Activated CD4-positive, alpha-beta T cell treated with anti-CD3 and anti-CD28 coated beads, Interleukin-2, amount 10 ng/mL, durations not matched to agents 24 days and 14 days (primary cell): ENCODE measurements at regions of chr1 and their contacts with region 1.

Region 1: GRCh38 chr1:228165372-228166169 is at the start of gene IBA57:
- DNase-seq: peak; percentile 100
- H3K4me3 Mint-ChIP-seq: peak within 1 kb of the TSS; percentile 91
- H3K27ac Mint-ChIP-seq: peak within 1 kb of the TSS; percentile 96
- H3K4me1 Mint-ChIP-seq: peaks cover 25% of the 10 kb centered on the region
- H3K27me3 Mint-ChIP-seq: no peaks in the 10 kb centered on the region
- total RNA-seq, gene IBA57: 10.8 and 11.4 TPM in 2 replicates

Region 2: DNA sequence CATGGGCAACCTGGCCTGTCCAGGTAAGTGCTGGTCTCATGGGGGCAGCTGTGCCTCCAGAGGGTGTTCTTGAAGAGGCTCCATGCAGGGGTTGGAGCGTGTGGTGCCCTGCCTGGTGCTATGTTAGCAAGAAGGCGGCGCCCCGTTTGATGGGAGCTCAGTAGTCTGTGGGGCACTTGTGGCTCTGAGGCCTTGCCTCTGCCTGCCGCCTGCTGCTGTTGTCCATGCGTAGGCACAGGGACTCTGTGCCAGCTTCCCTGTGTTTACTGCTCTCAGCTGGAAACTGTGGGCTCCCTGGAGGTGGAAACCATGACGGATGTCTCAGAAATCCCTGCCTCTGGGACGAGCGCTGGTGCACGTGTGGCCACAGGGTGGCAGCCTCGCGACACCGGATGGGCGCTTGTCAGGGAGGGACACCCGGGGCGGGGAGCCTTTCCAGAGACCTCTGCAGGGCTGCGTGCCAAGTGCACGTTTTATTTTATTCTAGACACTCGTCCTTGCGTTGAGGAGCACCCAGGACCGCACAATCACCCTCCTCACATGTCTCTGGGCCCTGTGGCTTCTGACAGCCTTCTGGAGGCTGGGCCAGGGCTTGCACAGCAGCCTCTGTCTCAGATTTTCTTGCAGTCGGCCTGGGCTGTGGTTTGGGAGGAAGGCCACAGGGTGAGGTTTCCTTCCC is 403.2 kb before region 1 on chr1:
- intact Hi-C with region 1: loop called (anchors 10 kb)
- DNase-seq: peak; percentile 96
- H3K4me3 Mint-ChIP-seq: peak overlapping the region; percentile 62
- H3K27ac Mint-ChIP-seq: peak overlapping the region; percentile 71
- H3K4me1 Mint-ChIP-seq: peaks cover 81% of the 10 kb centered on the region
- H3K27me3 Mint-ChIP-seq: no peaks in the 10 kb centered on the region

Region 3: DNA sequence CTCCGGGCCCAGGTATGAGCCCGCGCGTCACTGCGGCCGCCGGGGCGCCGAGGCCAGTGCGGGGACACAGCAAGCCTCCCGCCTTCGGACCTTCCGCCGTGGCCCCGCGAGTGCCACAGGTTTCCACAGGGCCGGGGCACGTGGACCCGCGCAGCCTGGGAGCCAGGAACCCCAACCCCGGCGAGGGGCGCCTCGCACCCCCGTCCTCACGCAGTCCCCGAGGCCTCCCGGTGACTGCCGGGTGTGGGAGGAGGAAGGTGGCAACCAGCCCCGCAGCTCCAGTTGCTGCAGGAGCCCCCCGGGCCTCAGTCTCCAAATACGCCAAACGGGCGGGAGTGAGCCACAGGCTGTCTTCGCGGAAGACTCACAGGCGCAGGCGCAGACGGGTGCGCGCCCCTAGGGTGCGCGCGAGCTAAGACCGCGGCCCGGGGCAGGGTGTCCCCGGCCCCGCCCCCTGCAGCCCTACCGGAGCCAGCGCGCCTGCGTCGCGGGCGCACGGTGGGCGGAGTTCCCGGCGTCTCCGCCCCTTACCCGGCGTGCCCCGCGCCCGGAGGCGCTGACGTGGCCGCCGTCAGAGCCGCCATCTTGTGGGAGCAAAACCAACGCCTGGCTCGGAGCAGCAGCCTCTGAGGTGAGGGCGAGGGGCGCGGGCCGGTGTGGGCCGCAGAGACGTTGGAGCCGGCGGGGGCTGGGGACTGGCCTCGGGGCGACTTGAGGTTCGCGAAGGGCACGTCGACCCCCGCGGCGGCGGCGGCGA is 83.3 kb before region 1 on chr1 and contains the start of gene ARF1:
- intact Hi-C with region 1: loop called (anchors 1 kb)
- DNase-seq: peak; percentile 98
- H3K4me3 Mint-ChIP-seq: peak within 1 kb of the TSS; percentile 97
- H3K27ac Mint-ChIP-seq: peak within 1 kb of the TSS; percentile 93
- H3K4me1 Mint-ChIP-seq: peaks cover 39% of the 10 kb centered on the region
- H3K27me3 Mint-ChIP-seq: no peaks in the 10 kb centered on the region
- total RNA-seq, gene ARF1: 388 and 395 TPM in 2 replicates

Region 4: GRCh38 chr1:228131766-228132165 is 33.8 kb before region 1 on chr1:
- intact Hi-C with region 1: loop called (anchors 2 kb)
- DNase-seq: no peak
- H3K4me3 Mint-ChIP-seq: no peak overlapping the region
- H3K27ac Mint-ChIP-seq: no peak overlapping the region
- H3K4me1 Mint-ChIP-seq: peaks cover 8% of the 10 kb centered on the region
- H3K27me3 Mint-ChIP-seq: peaks cover 40% of the 10 kb centered on the region

Region 5: GRCh38 chr1:228212966-228213844 is 47.6 kb after region 1 on chr1:
- intact Hi-C with region 1: loop called (anchors 1 kb)
- DNase-seq: peak; percentile 95
- H3K4me3 Mint-ChIP-seq: peak overlapping the region; percentile 95
- H3K27ac Mint-ChIP-seq: peak overlapping the region; percentile 91
- H3K4me1 Mint-ChIP-seq: peaks cover 7% of the 10 kb centered on the region
- H3K27me3 Mint-ChIP-seq: no peaks in the 10 kb centered on the region

Region 6: DNA sequence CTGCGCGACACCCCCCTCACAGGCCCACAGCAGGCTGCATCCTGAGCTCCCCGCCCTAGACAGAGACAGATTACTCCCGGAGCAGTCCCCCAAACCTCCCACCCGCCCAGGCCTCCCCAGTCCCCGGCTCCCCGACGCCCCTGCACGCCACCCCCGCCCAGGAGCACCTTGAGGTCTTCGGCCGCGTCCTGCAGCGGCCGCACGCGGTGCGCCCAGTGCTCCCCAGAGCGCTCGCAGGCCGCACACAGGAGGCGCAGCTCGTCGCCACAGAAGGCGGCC is 240.4 kb after region 1 on chr1:
- intact Hi-C with region 1: loop called (anchors 1 kb)
- DNase-seq: no peak
- H3K4me3 Mint-ChIP-seq: peak overlapping the region; percentile 98
- H3K27ac Mint-ChIP-seq: peak overlapping the region; percentile 94
- H3K4me1 Mint-ChIP-seq: peaks cover 49% of the 10 kb centered on the region
- H3K27me3 Mint-ChIP-seq: no peaks in the 10 kb centered on the region

Region 7: DNA sequence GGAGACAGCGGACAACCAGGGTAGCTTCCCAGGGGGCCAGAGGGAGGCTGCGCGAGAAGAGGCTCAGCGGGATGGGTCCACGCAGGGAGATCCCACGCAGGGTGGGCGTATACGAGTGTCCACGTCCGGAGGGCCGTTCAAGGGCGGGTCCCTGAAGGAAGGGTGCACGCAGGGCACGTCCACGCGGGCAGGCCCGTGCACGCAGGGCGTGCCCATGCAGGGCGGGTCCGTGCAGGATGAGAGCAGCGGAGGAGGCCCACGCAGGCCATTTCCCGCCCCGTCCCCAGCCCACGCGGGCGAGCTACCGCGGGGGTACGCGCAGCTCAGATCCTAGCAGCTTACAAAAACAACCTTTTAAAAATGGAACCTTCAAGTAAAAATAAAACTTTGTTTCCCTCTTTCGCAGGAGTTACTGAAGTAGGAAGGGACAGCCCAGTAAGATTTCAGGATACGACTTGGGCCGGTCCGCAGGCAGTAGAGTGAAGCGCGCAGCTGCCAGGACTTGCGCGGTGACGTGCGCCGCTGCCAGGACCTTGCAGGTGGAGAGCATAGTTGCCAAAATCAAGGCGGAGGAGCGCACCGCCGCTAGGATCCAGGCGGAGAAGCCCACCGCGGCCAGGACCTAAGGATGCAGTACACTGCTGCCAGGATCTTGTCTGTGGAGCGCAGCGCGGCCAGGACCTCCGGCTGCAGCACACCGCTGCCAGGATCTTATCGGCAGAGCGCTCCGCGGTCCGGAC is 321.2 kb after region 1 on chr1:
- intact Hi-C with region 1: loop called (anchors 1 kb)
- DNase-seq: peak; percentile 93
- H3K4me3 Mint-ChIP-seq: peak overlapping the region; percentile 93
- H3K27ac Mint-ChIP-seq: peak overlapping the region; percentile 99
- H3K4me1 Mint-ChIP-seq: peaks cover 39% of the 10 kb centered on the region
- H3K27me3 Mint-ChIP-seq: no peaks in the 10 kb centered on the region